Activated CD4-positive, alpha-beta memory T cell treated with anti-CD3 and anti-CD28 coated beads for 36 hours (primary cell): ENCODE measurements at regions of chr15 and their contacts with region 1.

Region 1: GRCh38 chr15:52466134-52466701 is 62.5 kb downstream of the MYO5A start:
- DNase-seq: peak; percentile 84
- H3K4me3 Mint-ChIP-seq: no peak overlapping the region
- H3K27ac Mint-ChIP-seq: peak overlapping the region; percentile 73
- H3K4me1 Mint-ChIP-seq: peaks cover 46% of the 10 kb centered on the region
- H3K27me3 Mint-ChIP-seq: no peaks in the 10 kb centered on the region

Region 2: GRCh38 chr15:52186651-52187486 is 279.3 kb before region 1 on chr15:
- CTCF ChIA-PET with region 1: no interaction called
- POLR2A ChIA-PET with region 1: no interaction called
- intact Hi-C with region 1: no loop called
- DNase-seq: no peak
- H3K4me3 Mint-ChIP-seq: no peak overlapping the region
- H3K27ac Mint-ChIP-seq: no peak overlapping the region
- H3K4me1 Mint-ChIP-seq: peaks cover 2% of the 10 kb centered on the region
- H3K27me3 Mint-ChIP-seq: no peaks in the 10 kb centered on the region

Region 3: GRCh38 chr15:52256366-52256765 is 209.9 kb before region 1 on chr15:
- CTCF ChIA-PET with region 1: interaction called, 7 read pairs
- POLR2A ChIA-PET with region 1: interaction called, 4 read pairs
- intact Hi-C with region 1: loop called (anchors 1 kb)
- DNase-seq: peak; percentile 84
- H3K4me3 Mint-ChIP-seq: peak overlapping the region; percentile 37
- H3K27ac Mint-ChIP-seq: peak overlapping the region; percentile 56
- H3K4me1 Mint-ChIP-seq: peaks cover 23% of the 10 kb centered on the region
- H3K27me3 Mint-ChIP-seq: no peaks in the 10 kb centered on the region

Region 4: DNA sequence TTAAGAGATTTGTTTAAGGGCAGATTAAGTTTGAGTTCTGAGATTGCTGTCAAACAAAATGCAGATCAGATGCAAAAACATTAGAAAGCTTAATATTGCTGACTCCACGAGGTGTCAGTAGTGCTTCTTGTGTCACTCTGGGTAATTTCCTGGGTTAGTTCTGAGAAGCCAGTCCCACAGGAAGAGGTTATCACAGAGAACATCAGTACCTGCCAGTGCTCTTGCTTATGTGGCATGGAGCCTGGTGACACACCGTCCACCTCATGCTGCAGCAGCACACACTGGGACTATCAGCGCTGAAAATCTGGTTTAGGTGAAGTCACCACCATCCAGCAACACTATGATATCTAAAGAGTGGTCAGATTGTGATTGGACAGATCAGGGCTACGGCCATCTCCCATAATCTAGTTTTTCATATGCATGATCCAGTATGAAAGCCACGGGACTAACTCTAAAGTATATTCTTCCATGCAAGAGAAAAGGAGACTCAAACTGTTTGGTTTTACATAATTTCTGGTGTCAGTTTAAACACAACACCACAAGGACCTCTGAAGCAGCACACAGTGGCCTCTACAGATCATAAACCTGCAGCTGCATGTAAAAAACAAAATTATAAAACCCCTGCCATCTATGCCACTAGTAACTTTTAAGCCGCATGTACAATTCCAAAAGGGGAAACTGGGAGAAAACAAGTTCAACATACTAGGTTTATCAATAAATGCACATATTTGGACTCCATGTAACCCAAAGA is 134.6 kb before region 1 on chr15:
- CTCF ChIA-PET with region 1: interaction called, 4 read pairs
- POLR2A ChIA-PET with region 1: no interaction called
- intact Hi-C with region 1: loop called (anchors 1 kb)
- DNase-seq: peak; percentile 76
- H3K4me3 Mint-ChIP-seq: no peak overlapping the region
- H3K27ac Mint-ChIP-seq: peak overlapping the region; percentile 82
- H3K4me1 Mint-ChIP-seq: peaks cover 18% of the 10 kb centered on the region
- H3K27me3 Mint-ChIP-seq: no peaks in the 10 kb centered on the region

Region 5: GRCh38 chr15:52440400-52440799 is 25.8 kb before region 1 on chr15:
- CTCF ChIA-PET with region 1: interaction called, 3 read pairs
- POLR2A ChIA-PET with region 1: no interaction called
- intact Hi-C with region 1: loop called (anchors 1 kb)
- DNase-seq: peak; percentile 61
- H3K4me3 Mint-ChIP-seq: no peak overlapping the region
- H3K27ac Mint-ChIP-seq: no peak overlapping the region
- H3K4me1 Mint-ChIP-seq: peaks cover 42% of the 10 kb centered on the region
- H3K27me3 Mint-ChIP-seq: no peaks in the 10 kb centered on the region

Region 6: GRCh38 chr15:52496776-52497470 is 30.7 kb after region 1 on chr15:
- CTCF ChIA-PET with region 1: interaction called, 6 read pairs
- POLR2A ChIA-PET with region 1: interaction called, 3 read pairs
- intact Hi-C with region 1: loop called (anchors 1 kb)
- DNase-seq: peak; percentile 78
- H3K4me3 Mint-ChIP-seq: no peak overlapping the region
- H3K27ac Mint-ChIP-seq: no peak overlapping the region
- H3K4me1 Mint-ChIP-seq: peaks cover 18% of the 10 kb centered on the region
- H3K27me3 Mint-ChIP-seq: no peaks in the 10 kb centered on the region

Region 7: GRCh38 chr15:52730173-52730572 is 264.0 kb after region 1 on chr15:
- CTCF ChIA-PET with region 1: no interaction called
- POLR2A ChIA-PET with region 1: no interaction called
- intact Hi-C with region 1: loop called (anchors 5 kb)
- DNase-seq: peak; percentile 53
- H3K4me3 Mint-ChIP-seq: no peak overlapping the region
- H3K27ac Mint-ChIP-seq: peak overlapping the region; percentile 43
- H3K4me1 Mint-ChIP-seq: peaks cover 36% of the 10 kb centered on the region
- H3K27me3 Mint-ChIP-seq: no peaks in the 10 kb centered on the region